ENCODE measurements at regions of chr2 and their contacts with region 1.

Region 1: DNA sequence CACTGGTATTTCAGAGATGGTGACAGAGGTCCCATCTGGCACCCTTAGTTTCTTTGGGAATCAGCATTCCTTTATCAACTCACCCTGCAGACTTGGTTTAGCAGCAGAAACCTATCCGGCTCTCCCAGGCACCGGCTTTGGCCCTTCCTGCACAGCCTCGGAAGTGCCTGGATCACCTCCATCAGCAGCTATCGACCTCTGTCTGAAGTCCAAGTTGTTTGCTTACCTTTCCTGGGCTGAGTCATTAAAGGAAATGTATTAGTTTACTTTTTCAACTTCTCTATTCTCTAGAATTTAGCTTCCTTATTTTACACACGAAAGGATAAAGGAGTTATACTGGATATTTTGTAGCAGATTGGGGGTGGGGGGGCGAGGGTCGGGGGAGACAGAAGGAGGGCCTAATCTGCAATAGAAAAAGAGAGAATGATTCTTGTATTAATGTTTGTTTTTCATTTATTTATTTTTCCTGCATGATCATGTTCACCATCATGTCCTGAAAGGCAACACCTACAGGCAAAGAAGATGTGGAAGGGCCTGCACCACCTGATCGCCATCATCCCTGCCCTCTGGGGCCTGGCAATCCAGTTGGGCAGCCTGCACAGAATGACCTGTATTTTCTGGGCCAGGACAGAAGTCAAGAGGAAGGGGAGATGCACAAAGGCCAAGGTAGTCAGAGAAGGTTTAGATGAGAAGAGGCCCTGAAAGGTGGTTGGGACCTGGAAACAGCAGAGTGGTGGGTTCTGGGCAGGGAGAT is 22.1 kb upstream of the MAT2A start:
- DNase-seq: no peak

Region 2: DNA sequence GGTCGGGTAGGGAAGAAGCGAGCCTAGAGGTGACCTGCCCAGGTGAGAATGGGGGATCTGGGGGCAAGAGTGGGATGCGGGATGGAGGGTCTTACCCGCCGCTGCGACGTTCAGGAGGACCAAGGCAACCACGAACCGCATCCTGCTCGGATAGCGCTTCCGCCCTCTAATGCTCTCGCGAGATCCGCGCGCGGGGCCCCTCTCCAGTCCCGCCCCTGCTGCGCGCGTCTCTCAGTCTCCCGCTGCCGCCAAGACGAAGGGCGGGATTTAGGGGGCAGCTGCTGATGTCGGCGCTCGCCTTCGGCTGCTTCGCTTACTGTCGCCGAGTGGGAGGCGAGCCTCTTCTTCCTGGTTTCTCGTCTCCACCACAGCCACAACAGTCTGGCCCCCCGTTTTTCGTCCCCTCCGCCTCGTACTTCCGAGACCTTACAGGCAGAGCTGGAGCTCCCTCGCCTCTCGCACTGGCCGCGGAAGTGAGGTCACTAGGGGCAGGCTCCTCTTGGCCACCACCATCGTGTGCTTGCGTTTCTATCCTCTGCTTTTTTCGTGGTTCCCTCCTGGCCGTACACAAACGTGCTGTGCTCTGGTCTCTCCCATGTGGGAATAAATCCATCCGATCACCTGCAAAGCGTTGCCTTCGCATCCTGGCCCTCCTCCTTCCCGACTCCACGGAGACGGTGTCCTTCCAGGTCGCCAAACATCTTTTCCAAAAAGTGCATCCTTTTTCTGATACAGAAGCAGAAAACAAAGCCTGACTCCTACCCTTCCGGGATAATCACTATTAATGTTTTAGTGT is 188.8 kb before region 1 on chr2 and contains the start of gene TGOLN2:
- in situ Hi-C with region 1: no loop called
- DNase-seq: peak; percentile 91
- total RNA-seq, gene TGOLN2: 14.1 and 16.9 TPM in 2 replicates

Region 3: GRCh38 chr2:85457877-85458316 is 58.9 kb before region 1 on chr2:
- in situ Hi-C with region 1: loop called (anchors 5 kb)
- DNase-seq: no peak

Region 4: DNA sequence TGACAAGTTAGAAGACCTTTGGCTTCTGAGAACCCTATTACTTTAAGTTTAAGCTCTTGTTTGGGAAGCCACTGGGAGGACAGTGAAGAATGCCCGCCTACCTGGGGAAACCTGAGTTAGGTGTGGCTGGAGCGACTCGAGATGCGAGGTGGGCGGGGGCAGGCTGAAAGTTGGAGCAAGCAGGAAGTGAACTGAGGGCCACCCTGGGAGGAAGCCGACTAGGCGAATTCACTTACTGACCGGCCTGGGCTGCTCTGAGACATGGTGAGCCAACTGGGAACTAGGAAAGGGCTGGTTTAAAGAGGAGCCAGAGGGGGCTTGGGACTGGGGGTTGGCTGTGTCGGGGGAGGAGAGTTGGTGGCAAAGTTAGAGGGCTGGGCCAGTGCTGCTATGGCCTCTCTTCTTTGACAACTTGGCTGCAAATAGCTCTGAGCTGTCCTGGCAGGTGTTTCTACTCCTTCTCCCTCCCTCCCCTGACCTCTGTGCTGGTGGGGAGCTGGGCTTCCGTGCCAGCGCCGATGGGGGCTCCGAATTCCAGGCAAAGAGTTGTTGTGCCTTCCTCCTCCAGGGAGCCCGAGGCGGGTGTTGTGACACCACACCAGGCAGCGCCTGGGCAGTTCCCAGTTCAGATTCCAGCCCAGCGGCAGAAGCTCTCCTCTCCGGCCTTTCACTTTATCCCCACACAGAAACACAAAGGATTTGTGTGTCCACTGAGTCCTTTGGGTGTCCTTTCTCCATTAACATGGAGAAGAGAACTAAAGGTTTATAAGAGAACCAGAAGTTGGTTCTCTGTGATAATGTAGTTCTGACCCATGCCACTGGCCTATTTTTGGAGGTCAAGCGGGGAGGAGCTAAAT is 60.8 kb after region 1 on chr2 and contains the start of gene VAMP8:
- in situ Hi-C with region 1: no loop called
- DNase-seq: no peak
- total RNA-seq, gene VAMP8: 69.9 and 73.2 TPM in 2 replicates